SK-N-SH (cell line): ENCODE measurements at regions of chr4 and their contacts with region 1.

Region 1: DNA sequence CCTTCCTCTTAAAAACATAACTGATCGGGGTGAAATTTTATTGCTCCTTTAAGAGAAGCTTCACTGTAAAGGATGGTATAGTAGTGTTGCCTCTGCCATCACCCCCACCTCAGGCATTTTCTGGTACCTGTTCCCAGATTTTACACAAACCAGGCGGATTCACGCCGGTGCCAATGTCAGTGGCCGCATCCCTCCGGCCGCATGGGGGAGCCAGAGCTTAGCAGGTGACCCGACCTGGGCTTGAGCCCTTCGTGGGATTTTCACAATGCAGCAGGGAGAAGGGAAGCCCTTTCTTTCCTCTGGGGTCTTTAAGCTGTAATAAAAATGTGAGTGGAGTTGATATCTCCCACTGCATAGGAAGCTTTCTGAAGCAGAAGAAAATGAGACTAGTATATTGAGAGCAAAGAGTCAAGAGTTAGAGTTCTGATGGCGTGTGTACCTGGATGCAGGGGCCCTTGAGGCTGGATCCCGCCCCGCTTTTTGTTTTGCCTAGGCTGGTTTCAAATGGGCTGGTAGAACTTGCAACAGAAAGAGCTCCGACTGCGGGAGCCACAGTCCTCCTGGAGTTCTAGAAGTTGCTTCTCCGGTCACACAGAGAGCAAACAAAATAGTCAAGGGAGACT is 59.4 kb downstream of the POLR2B start:
- DNase-seq: peak; percentile 72
- H3K4me3 ChIP-seq: 0 out of 4 replicates have a peak overlapping the region, but pooled peaks of 1 of the 2 experiments have one; percentile 27
- H3K27ac ChIP-seq: peak overlapping the region in 1 of 2 experiments; percentile 16; a peak in 1 of 4 replicates
- H3K4me1 ChIP-seq: peaks cover 0 to 12% of the 10 kb centered on the region in 2 experiments; a peak in 2 of 4 replicates
- H3K27me3 ChIP-seq: no peaks in the 10 kb centered on the region
- CTCF ChIP-seq: peak; percentile 97
- EP300 ChIP-seq: no peak
- RAD21 ChIP-seq: peak; percentile 98

Region 2: DNA sequence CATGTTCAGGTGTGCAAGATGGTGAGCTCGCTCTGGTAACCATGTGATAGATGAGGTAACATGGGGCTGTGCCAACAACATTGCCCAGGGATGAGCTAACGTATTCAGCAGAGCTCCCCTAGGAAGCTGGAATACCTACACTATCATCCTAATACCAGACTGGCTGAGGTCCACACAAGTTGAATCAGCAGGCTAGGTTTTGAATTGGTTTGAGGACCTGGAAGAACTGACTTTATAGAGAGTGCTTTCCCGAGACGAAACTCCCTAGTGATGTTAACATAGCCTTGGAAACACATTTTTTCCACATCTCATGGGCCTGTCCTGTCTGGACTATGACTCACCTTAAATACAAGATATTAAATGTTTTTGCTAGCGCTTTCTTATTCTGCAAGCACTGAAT is 15.4 kb after region 1 on chr4:
- CTCF ChIA-PET with region 1: interaction called, 33 read pairs
- POLR2A ChIA-PET with region 1: no interaction called
- DNase-seq: no peak
- H3K4me3 ChIP-seq: no peak overlapping the region
- H3K27ac ChIP-seq: peak overlapping the region in 1 of 2 experiments; percentile 68; a peak in 2 of 4 replicates
- H3K4me1 ChIP-seq: peaks cover 5 to 12% of the 10 kb centered on the region in 2 experiments; a peak in 1 of 4 replicates
- H3K27me3 ChIP-seq: no peaks in the 10 kb centered on the region
- CTCF ChIP-seq: no peak
- EP300 ChIP-seq: no peak
- RAD21 ChIP-seq: no peak

Region 3: GRCh38 chr4:57093845-57094831 is 56.0 kb after region 1 on chr4:
- CTCF ChIA-PET with region 1: interaction called, 10 read pairs
- POLR2A ChIA-PET with region 1: no interaction called
- DNase-seq: no peak
- H3K4me3 ChIP-seq: no peak overlapping the region
- H3K27ac ChIP-seq: peak overlapping the region in 1 of 2 experiments; percentile 61; a peak in 2 of 4 replicates
- H3K4me1 ChIP-seq: peaks cover 11% of the 10 kb centered on the region in 2 experiments; a peak in 3 of 4 replicates
- H3K27me3 ChIP-seq: no peaks in the 10 kb centered on the region
- CTCF ChIP-seq: no peak
- EP300 ChIP-seq: no peak
- RAD21 ChIP-seq: no peak

Region 4: GRCh38 chr4:57110640-57111511 is 72.8 kb after region 1 on chr4:
- CTCF ChIA-PET with region 1: interaction called, 13 read pairs
- POLR2A ChIA-PET with region 1: no interaction called
- DNase-seq: peak; percentile 34
- H3K4me3 ChIP-seq: no peak overlapping the region
- H3K27ac ChIP-seq: no peak overlapping the region
- H3K4me1 ChIP-seq: peaks cover 5 to 12% of the 10 kb centered on the region in 2 experiments
- H3K27me3 ChIP-seq: no peaks in the 10 kb centered on the region
- CTCF ChIP-seq: no peak
- EP300 ChIP-seq: no peak
- RAD21 ChIP-seq: no peak

Region 5: GRCh38 chr4:57158221-57158620 is 120.1 kb after region 1 on chr4:
- CTCF ChIA-PET with region 1: interaction called, 139 read pairs
- POLR2A ChIA-PET with region 1: no interaction called
- DNase-seq: peak; percentile 42
- H3K4me3 ChIP-seq: no peak overlapping the region
- H3K27ac ChIP-seq: peak overlapping the region; percentile 39 to 82; a peak in 2 of 4 replicates
- H3K4me1 ChIP-seq: peaks cover under 1 to 23% of the 10 kb centered on the region in 2 experiments
- H3K27me3 ChIP-seq: no peaks in the 10 kb centered on the region
- CTCF ChIP-seq: peak; percentile 29; the same call in 1 of the 2 replicates
- EP300 ChIP-seq: no peak
- RAD21 ChIP-seq: peak; percentile 49

Region 6: DNA sequence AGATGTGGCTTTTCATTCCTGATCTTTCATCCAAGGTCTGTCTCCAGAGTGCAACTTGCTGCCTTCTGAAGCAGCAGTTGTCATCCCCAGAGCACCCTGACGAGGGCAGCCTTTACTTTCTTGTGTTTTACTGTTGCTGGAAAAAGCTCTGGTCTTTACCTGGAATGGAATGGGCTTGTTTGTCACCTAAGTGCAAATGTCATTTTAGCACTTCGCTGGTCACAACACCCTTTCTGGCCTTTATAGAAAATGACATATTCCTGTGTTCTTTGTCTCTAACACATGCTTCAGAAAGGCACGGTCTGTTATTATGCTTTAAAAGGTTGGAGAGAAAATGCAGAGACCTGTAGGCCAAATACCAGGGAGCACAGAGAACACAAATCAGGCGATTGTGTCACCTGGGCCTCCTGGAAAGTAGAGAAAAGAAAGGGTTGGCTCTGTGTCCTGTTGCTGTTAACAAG is 404.8 kb after region 1 on chr4:
- CTCF ChIA-PET with region 1: interaction called, 16 read pairs
- POLR2A ChIA-PET with region 1: no interaction called
- DNase-seq: peak; percentile 54
- H3K4me3 ChIP-seq: peak overlapping the region in 1 of 2 experiments; percentile 46; a peak in 1 of 4 replicates
- H3K27ac ChIP-seq: no peak overlapping the region
- H3K4me1 ChIP-seq: no peaks in the 10 kb centered on the region
- H3K27me3 ChIP-seq: no peaks in the 10 kb centered on the region
- CTCF ChIP-seq: peak; percentile 78
- EP300 ChIP-seq: no peak
- RAD21 ChIP-seq: peak; percentile 93